A673 (cell line): ENCODE measurements at regions of chr20 and their contacts with region 1.

Region 1: DNA sequence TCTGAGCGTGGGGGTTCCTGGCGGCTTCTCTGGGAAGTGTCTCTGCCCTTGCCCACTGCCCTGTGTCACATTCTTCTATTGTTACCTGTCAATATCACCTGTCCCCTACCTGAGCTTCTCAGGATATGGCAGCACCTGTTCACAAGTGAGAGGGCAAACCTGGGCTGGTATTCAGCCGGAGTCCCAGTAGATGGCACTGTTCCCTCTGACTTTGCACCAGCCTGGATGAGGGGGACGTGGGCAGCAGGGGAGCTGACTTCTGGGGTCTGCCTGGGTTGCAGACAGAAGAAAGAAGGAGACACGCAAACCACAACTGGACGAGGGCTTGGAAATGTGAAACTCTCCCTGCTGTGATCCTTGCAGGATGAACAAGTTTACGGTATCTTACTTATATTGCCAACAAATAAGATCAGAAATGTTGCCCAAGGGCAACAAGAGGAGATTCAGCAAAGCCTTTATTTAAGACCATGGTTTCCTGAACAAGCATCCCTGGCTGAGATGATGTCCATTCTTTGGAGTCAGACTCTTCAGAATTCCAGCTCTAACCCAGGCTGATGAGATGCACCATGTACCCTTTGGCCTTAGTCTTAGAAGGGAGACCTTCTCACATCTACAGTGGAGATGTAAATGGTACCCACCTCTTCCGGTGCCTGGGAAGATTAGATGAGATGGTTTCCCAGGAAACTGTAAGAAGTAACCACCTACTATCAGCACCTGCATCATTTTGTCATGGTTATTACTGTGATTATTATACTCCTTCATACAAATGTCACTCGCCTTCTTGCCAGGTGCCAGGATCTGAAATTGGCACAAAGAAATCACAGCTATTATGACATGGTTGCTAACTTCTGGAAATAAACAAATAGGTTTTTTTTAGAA is 400.0 kb upstream of the CDH4 start:
- DNase-seq: peak; percentile 19
- H3K4me3 ChIP-seq: no peak overlapping the region
- H3K27ac ChIP-seq: no peak overlapping the region
- H3K4me1 ChIP-seq: no peaks in the 10 kb centered on the region
- H3K27me3 ChIP-seq: peaks cover 21% of the 10 kb centered on the region
- CTCF ChIP-seq: peak; percentile 65

Region 2: DNA sequence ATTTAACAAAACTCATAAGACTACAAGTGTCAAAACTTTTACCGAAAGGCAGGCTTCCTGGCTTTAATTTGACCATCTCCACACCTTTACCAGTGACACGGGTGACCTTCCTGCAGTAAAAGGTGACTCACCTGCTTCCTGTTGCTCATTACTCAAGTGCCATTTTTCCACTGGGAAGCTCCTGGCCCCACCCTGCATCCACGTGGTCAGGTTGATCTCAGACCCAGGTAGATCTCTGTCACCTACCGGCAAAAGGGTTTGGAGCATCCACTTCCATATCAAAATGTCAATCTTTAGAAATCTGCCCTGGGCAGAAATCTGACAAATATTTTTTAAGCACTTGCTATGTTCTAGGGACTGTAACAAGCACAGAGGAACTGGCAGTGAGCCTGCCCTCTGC is 368.1 kb after region 1 on chr20:
- CTCF ChIA-PET with region 1: no interaction called
- POLR2A ChIA-PET with region 1: no interaction called
- intact Hi-C with region 1: loop called (anchors 5 kb)
- DNase-seq: no peak
- H3K4me3 ChIP-seq: no peak overlapping the region
- H3K27ac ChIP-seq: no peak overlapping the region
- H3K4me1 ChIP-seq: no peaks in the 10 kb centered on the region
- H3K27me3 ChIP-seq: peaks cover 12% of the 10 kb centered on the region
- CTCF ChIP-seq: no peak